Activated T-helper 2 cell treated with anti-CD3 and anti-CD28 coated beads, Interferon-gamma antibody, Interleukin-2, Interleukin-4, amounts not matched to agents 10 μg/mL and 5 μg/mL and 100 μg/mL, durations not matched to agents 14 hours and 24 hours and 36 hours (primary cell): ENCODE measurements at regions of chr20 and their contacts with region 1.

Region 1: DNA sequence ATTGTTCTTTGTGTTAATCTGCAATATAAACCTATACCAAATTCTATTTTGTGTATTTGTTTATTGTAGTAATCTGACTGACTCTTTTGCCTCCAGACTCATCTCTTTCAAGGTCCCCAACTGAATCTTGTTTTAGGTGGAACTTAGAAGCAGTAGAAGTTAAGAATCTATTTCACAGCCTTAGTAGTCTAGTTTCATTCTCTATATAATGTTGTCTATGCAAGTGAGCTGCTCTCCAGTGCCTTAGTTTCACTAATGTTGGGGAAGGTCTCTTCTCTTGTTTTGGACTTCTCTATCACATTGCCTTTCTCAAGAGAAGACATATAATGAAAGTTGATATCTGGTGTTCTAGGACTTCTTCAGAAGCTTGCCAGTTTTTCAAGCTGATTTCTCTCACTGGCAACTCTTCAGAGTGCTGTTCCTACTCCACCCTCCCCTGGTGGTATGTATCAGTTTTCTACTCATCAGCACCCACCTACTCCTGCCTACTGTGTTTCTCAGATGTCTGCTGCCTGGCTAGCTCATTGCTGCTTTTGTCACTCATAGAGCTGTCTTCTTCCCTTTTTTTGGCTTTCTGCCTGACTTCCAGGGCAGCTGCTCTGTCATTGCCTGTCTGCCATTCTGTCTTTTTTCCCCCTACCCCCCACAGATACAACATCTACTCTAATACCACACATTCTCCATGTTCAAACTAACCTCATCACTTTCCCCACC is 82.1 kb downstream of the PTPRA start:
- DNase-seq: no peak
- H3K4me3 Mint-ChIP-seq: no peak overlapping the region
- H3K27ac Mint-ChIP-seq: peak overlapping the region; percentile 85
- H3K4me1 Mint-ChIP-seq: peaks cover 26% of the 10 kb centered on the region
- H3K27me3 Mint-ChIP-seq: no peaks in the 10 kb centered on the region

Region 2: GRCh38 chr20:2914160-2914559 is 41.3 kb before region 1 on chr20:
- intact Hi-C with region 1: loop called (anchors 5 kb)
- DNase-seq: no peak
- H3K4me3 Mint-ChIP-seq: no peak overlapping the region
- H3K27ac Mint-ChIP-seq: no peak overlapping the region
- H3K4me1 Mint-ChIP-seq: peaks cover 11% of the 10 kb centered on the region
- H3K27me3 Mint-ChIP-seq: no peaks in the 10 kb centered on the region